Activated CD8-positive, alpha-beta T cell treated with anti-CD3 and anti-CD28 coated beads, Interleukin-2, amount 10 ng/mL, durations not matched to agents 7 days and 5 days (primary cell): ENCODE measurements at regions of chr10 and their contacts with region 1.

Region 1: GRCh38 chr10:74213571-74214162 is 62.6 kb downstream of the ADK start:
- DNase-seq: peak; percentile 59
- ATAC-seq: no peak
- H3K4me3 Mint-ChIP-seq: no peak overlapping the region
- H3K27ac Mint-ChIP-seq: no peak overlapping the region
- H3K4me1 Mint-ChIP-seq: peaks cover 6% of the 10 kb centered on the region
- H3K27me3 Mint-ChIP-seq: no peaks in the 10 kb centered on the region

Region 2: GRCh38 chr10:74189999-74190421 is 23.7 kb before region 1 on chr10:
- CTCF ChIA-PET with region 1: interaction called, 18 read pairs
- POLR2A ChIA-PET with region 1: no interaction called
- DNase-seq: peak; percentile 51
- ATAC-seq: peak; percentile 87
- H3K4me3 Mint-ChIP-seq: peak overlapping the region; percentile 61
- H3K27ac Mint-ChIP-seq: peak overlapping the region; percentile 89
- H3K4me1 Mint-ChIP-seq: peaks cover 45% of the 10 kb centered on the region
- H3K27me3 Mint-ChIP-seq: no peaks in the 10 kb centered on the region

Region 3: GRCh38 chr10:74234569-74234968 is 20.9 kb after region 1 on chr10:
- CTCF ChIA-PET with region 1: interaction called, 19 read pairs
- POLR2A ChIA-PET with region 1: no interaction called
- DNase-seq: no peak
- ATAC-seq: no peak
- H3K4me3 Mint-ChIP-seq: no peak overlapping the region
- H3K27ac Mint-ChIP-seq: no peak overlapping the region
- H3K4me1 Mint-ChIP-seq: peaks cover 13% of the 10 kb centered on the region
- H3K27me3 Mint-ChIP-seq: no peaks in the 10 kb centered on the region